Heart right ventricle (tissue), 16 donors: ENCODE measurements at regions of chr5 and their contacts with region 1.

Region 1: GRCh38 chr5:15234366-15234765 is 265.6 kb upstream of the FBXL7 start:
- DNase-seq: no peak
- ATAC-seq: no peak
- H3K4me3 ChIP-seq: no peak overlapping the region
- H3K27ac ChIP-seq: no peak overlapping the region
- H3K4me1 ChIP-seq: peaks cover 0 to 16% (median 0%) of the 10 kb centered on the region in 9 donors
- H3K27me3 ChIP-seq: no peaks in the 10 kb centered on the region
- CTCF ChIP-seq: no peak

Region 2: DNA sequence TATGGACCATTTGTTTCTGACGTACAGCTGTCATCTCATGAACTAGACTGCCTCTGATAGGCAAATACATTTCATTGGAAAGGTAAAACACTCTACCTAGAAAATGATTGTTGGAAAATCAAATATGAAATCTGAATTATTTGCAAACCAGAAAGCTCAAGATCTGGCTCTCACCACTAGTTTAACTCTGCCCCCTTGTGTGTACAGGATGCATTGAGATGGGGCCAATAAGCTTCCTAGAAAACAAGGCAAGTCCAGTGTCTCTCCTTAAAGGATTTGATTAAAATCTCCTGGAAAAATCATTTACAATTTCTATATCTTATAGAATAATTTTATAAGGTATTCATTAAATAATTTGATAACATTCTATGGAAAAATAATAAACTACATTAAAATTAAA is 50.8 kb before region 1 on chr5:
- intact Hi-C with region 1: no loop called
- DNase-seq: no peak
- ATAC-seq: no peak
- H3K4me3 ChIP-seq: no peak overlapping the region
- H3K27ac ChIP-seq: no peak overlapping the region
- H3K4me1 ChIP-seq: no peaks in the 10 kb centered on the region
- H3K27me3 ChIP-seq: no peaks in the 10 kb centered on the region
- CTCF ChIP-seq: peak in 8 of 9 donors; percentile 8 to 46 (median 34)

Region 3: GRCh38 chr5:15220642-15221173 is 13.7 kb before region 1 on chr5:
- intact Hi-C with region 1: loop called in 1 of 10 experiments (anchors 1 kb)
- DNase-seq: no peak
- ATAC-seq: no peak
- H3K4me3 ChIP-seq: no peak overlapping the region
- H3K27ac ChIP-seq: no peak overlapping the region
- H3K4me1 ChIP-seq: no peaks in the 10 kb centered on the region
- H3K27me3 ChIP-seq: no peaks in the 10 kb centered on the region
- CTCF ChIP-seq: no peak